Heart left ventricle (tissue), 16 donors: ENCODE measurements at regions of chr3 and their contacts with region 1.

Region 1: GRCh38 chr3:49104483-49105291 is at the start of gene QARS1:
- DNase-seq: peak; percentile 96 to 97 (median 97)
- ATAC-seq: peak; percentile 97 to 99 (median 98)
- H3K4me3 ChIP-seq: peak within 1 kb of the TSS; percentile 68 to 99 (median 88)
- H3K27ac ChIP-seq: peak within 1 kb of the TSS; percentile 63 to 96 (median 88)
- H3K4me1 ChIP-seq: peaks cover 13 to 25% (median 18%) of the 10 kb centered on the region in 12 donors
- H3K27me3 ChIP-seq: no peaks in the 10 kb centered on the region
- CTCF ChIP-seq: no peak
- POLR2A ChIP-seq: peak; percentile 33 to 79
- total RNA-seq, gene QARS1: 145 to 221 (median 194) TPM

Region 2: GRCh38 chr3:48561045-48561736 is 543.5 kb before region 1 on chr3:
- intact Hi-C with region 1: no loop called
- DNase-seq: peak; percentile 59 to 83 (median 63)
- ATAC-seq: peak in 2 of 4 donors; percentile 5 to 10
- H3K4me3 ChIP-seq: peak overlapping the region in 11 of 12 donors; percentile 4 to 54 (median 44)
- H3K27ac ChIP-seq: peak overlapping the region in 11 of 12 donors; percentile 59 to 87 (median 66)
- H3K4me1 ChIP-seq: peaks cover 5 to 69% (median 30%) of the 10 kb centered on the region in 12 donors
- H3K27me3 ChIP-seq: no peaks in the 10 kb centered on the region
- CTCF ChIP-seq: peak in 5 of 12 donors; percentile 9 to 34 (median 16)
- POLR2A ChIP-seq: no peak

Region 3: DNA sequence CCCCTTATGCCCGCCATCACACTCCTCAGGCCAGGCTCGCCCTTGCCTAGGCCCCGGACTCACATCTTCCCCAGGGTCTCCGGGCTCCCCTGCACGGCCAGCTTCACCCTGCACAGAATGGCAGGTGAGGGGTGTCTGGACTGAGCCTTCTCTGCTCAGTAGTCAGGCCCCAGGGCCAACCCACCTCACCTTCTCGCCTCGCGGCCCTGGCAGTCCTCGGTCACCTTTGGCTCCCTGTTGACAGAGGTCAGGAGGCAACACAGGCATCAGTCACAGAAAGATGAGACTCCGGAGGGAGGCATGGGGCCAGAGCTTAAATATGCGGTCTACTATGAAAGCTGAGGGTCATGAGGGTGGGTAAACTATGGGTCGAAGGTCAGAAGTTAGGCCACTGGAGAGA is 532.7 kb before region 1 on chr3:
- intact Hi-C with region 1: no loop called
- DNase-seq: no peak
- ATAC-seq: no peak
- H3K4me3 ChIP-seq: no peak overlapping the region
- H3K27ac ChIP-seq: no peak overlapping the region
- H3K4me1 ChIP-seq: no peaks in the 10 kb centered on the region
- H3K27me3 ChIP-seq: no peaks in the 10 kb centered on the region
- CTCF ChIP-seq: no peak
- POLR2A ChIP-seq: no peak

Region 4: DNA sequence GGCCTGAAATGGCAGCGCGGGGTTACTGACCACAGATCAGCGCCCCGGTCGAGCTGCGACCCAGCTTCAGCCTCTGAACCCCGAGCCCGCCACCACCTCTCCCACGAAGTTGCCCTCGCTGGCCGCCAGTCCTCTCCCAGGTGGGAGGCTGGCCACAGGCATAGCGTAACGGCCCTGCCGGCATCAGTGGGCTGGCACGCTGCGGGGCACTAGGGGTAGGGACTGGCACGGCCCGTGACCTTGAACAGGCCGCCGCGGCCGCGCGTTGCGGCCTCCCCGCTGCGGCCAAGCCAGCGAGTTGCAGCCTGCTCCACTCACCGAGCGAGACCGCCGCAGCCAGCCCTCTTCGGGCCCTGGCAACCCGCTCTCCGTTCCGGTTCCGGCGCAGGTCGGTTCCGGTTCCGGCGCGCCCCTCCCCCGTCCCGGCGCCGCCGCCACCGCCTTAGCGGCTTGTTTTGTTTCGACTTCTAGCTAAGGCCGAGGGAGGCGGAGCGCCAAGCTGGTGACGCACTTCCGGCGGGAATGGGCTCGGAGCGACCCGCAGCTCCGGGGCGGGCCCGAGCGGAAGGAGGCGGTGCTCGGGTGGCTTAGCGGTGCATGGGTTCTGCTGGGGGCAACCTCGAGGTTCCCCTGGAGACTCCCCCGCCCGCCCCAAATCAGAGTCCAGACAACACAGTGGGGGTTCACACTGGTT is 15.9 kb after region 1 on chr3 and contains the start of gene USP19:
- intact Hi-C with region 1: loop called in 1 of 10 experiments (anchors 2 kb)
- DNase-seq: peak; percentile 95 to 98 (median 97)
- ATAC-seq: peak; percentile 81 to 94 (median 90)
- H3K4me3 ChIP-seq: peak within 1 kb of the TSS; percentile 64 to 99 (median 91)
- H3K27ac ChIP-seq: peak within 1 kb of the TSS; percentile 90 to 100 (median 97)
- H3K4me1 ChIP-seq: peaks cover 3 to 32% (median 19%) of the 10 kb centered on the region in 12 donors
- H3K27me3 ChIP-seq: no peaks in the 10 kb centered on the region
- CTCF ChIP-seq: peak in 1 of 12 donors; percentile 12
- POLR2A ChIP-seq: peak; percentile 66 to 80
- total RNA-seq, gene USP19: 47.9 to 90.3 (median 63.1) TPM